ENCODE measurements at regions of chr7 and their contacts with region 1.

Region 1: GRCh38 chr7:11332186-11332864 is 358.7 kb downstream of the PHF14 start:
- DNase-seq: no peak
- ATAC-seq: no peak
- H3K4me3 ChIP-seq: no peak overlapping the region
- H3K27ac ChIP-seq: no peak overlapping the region
- H3K4me1 ChIP-seq: no peaks in the 10 kb centered on the region
- H3K27me3 ChIP-seq: no peaks in the 10 kb centered on the region
- CTCF ChIP-seq: no peak
- POLR2A ChIP-seq: no peak

Region 2: DNA sequence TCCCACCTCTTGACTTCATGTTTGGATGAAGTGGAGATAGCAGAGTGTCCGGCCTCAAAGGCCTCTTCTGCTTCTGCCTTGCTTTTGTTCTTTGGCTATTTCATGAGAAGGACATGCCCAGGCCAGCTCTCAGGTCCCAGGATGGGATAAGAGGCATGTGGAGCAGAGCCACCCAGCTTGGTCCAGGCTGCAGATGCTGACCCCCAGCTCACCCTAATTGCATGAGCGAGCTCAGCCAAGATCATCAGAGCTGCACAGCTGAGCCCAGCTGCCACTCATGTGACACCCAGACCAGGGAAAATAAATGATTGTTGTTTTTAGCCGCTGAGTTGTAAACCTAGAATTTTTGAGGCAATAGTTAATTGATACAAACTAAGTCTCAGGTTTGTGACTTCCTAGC is 128.6 kb before region 1 on chr7:
- intact Hi-C with region 1: loop called in 1 of 2 experiments (anchors 10 kb)
- DNase-seq: no peak
- ATAC-seq: no peak
- H3K4me3 ChIP-seq: no peak overlapping the region
- H3K27ac ChIP-seq: no peak overlapping the region
- H3K4me1 ChIP-seq: no peaks in the 10 kb centered on the region
- H3K27me3 ChIP-seq: no peaks in the 10 kb centered on the region
- CTCF ChIP-seq: no peak
- POLR2A ChIP-seq: no peak